Aorta (tissue), 5 donors: ENCODE measurements at regions of chr6 and their contacts with region 1.

Region 1: GRCh38 chr6:37131104-37131959 is 38.6 kb upstream of the PIM1 start:
- DNase-seq: peak; percentile 80 to 82
- ATAC-seq: peak; percentile 51
- H3K4me3 ChIP-seq: no peak overlapping the region
- H3K27ac ChIP-seq: peak overlapping the region in 1 of 2 donors; percentile 34
- H3K4me1 ChIP-seq: no peaks in the 10 kb centered on the region
- H3K27me3 ChIP-seq: no peaks in the 10 kb centered on the region

Region 2: GRCh38 chr6:37059344-37060206 is 71.8 kb before region 1 on chr6:
- intact Hi-C with region 1: loop called in 1 of 2 experiments (anchors 5 kb)
- DNase-seq: peak; percentile 81 to 84
- ATAC-seq: peak; percentile 74
- H3K4me3 ChIP-seq: no peak overlapping the region
- H3K27ac ChIP-seq: peak overlapping the region in 1 of 2 donors; percentile 39
- H3K4me1 ChIP-seq: no peaks in the 10 kb centered on the region
- H3K27me3 ChIP-seq: no peaks in the 10 kb centered on the region

Region 3: GRCh38 chr6:37102279-37103168 is 28.8 kb before region 1 on chr6:
- intact Hi-C with region 1: loop called in 1 of 2 experiments (anchors 2 kb)
- DNase-seq: peak; percentile 94 to 95
- ATAC-seq: peak; percentile 93
- H3K4me3 ChIP-seq: peak overlapping the region; percentile 16 to 29
- H3K27ac ChIP-seq: peak overlapping the region; percentile 62 to 93
- H3K4me1 ChIP-seq: no peaks in the 10 kb centered on the region
- H3K27me3 ChIP-seq: no peaks in the 10 kb centered on the region